Activated T-helper 2 cell treated with anti-CD3 and anti-CD28 coated beads, Interferon-gamma antibody, Interleukin-2, Interleukin-4, amounts not matched to agents 10 μg/mL and 5 μg/mL and 100 μg/mL, durations not matched to agents 14 hours and 24 hours and 36 hours (primary cell): ENCODE measurements at regions of chr3 and their contacts with region 1.

Region 1: GRCh38 chr3:5006755-5007202 is 27.5 kb downstream of the BHLHE40 start:
- DNase-seq: peak; percentile 72
- H3K4me3 Mint-ChIP-seq: peak overlapping the region; percentile 37
- H3K27ac Mint-ChIP-seq: peak overlapping the region; percentile 76
- H3K4me1 Mint-ChIP-seq: peaks cover 48% of the 10 kb centered on the region
- H3K27me3 Mint-ChIP-seq: no peaks in the 10 kb centered on the region

Region 2: GRCh38 chr3:4986782-4987537 is 19.8 kb before region 1 on chr3:
- intact Hi-C with region 1: loop called (anchors 1 kb)
- DNase-seq: peak; percentile 75
- H3K4me3 Mint-ChIP-seq: peak overlapping the region; percentile 82
- H3K27ac Mint-ChIP-seq: peak overlapping the region; percentile 85
- H3K4me1 Mint-ChIP-seq: peaks cover 53% of the 10 kb centered on the region
- H3K27me3 Mint-ChIP-seq: no peaks in the 10 kb centered on the region

Region 3: DNA sequence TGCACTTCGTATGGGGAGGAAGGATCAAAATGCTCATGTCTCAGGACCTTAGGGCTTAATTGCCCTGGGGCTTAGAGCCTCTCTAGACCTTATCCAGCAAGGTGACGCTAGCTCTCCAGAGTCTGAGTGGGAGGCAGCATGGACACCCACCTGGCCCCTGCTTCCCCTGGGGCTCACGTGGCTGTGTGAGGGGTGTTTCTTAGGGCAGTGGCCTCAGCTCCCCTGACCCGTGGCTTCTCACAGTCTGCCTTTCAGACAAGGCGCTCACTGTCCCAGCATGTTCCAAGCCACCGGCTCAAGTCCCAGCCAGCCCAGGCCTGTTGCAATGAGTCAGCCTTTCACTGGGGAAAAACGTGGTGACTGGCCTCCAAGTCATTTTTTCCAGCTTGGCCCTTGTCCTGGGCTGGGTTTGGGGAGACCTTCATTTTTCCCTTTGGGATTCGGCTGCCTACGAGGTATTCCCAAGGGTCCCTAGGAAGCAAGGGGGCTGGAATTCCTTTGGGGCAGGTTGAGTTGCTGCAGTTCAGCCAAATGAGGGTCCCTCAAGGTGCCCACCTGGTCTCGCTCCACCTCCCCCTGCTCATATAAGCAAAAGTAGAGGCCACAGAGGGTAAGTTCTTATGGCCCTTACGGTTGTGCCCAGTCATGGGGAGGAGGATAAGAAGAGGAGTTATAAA is 11.8 kb before region 1 on chr3:
- intact Hi-C with region 1: loop called (anchors 1 kb)
- DNase-seq: no peak
- H3K4me3 Mint-ChIP-seq: no peak overlapping the region
- H3K27ac Mint-ChIP-seq: peak overlapping the region; percentile 79
- H3K4me1 Mint-ChIP-seq: peaks cover 42% of the 10 kb centered on the region
- H3K27me3 Mint-ChIP-seq: no peaks in the 10 kb centered on the region